ENCODE measurements at regions of chr20 and their contacts with region 1.

Region 1: DNA sequence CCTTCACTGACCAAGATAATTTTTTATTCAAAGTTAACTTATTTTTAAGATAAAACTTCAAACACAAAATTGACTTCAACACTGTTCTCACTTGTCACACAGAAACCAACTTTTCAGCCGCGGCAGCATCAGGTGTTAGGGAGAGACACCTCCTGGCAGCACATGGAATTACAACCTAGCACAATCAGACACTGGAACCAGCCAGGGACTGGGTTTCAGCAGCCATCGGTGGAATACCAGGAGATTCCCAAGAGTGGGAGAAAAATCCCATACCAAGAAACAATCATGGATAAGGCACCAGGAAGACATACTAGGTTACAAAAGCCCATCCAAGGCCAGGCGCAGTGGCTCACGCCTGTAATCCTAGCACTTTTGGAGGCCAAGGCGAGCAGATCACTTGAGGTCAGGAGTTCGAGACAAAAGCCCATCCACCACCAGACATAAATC is 70.0 kb downstream of the SNX5 start:
- DNase-seq: peak; percentile 78
- ATAC-seq: peak; percentile 80
- H3K4me3 ChIP-seq: no peak overlapping the region
- H3K4me3 Mint-ChIP-seq: no peak overlapping the region
- H3K27ac ChIP-seq: no peak overlapping the region
- H3K27ac Mint-ChIP-seq: peak overlapping the region; percentile 0
- H3K4me1 ChIP-seq: peaks cover 47 to 48% of the 10 kb centered on the region in 2 donors
- H3K4me1 Mint-ChIP-seq: peaks cover 46% of the 10 kb centered on the region
- H3K27me3 ChIP-seq: peaks cover 0 to 4% (median 2%) of the 10 kb centered on the region in 4 experiments
- H3K27me3 Mint-ChIP-seq: peaks cover 21% of the 10 kb centered on the region
- CTCF ChIP-seq: peak; percentile 98

Region 2: GRCh38 chr20:17504898-17505635 is 393.5 kb before region 1 on chr20:
- CTCF ChIA-PET with region 1: interaction called, 11 read pairs
- POLR2A ChIA-PET with region 1: no interaction called
- intact Hi-C with region 1: loop called (anchors 1 kb)
- DNase-seq: peak; percentile 83
- ATAC-seq: peak; percentile 84
- H3K4me3 ChIP-seq: peak overlapping the region; percentile 47 to 81 (median 59)
- H3K4me3 Mint-ChIP-seq: peak overlapping the region; percentile 94
- H3K27ac ChIP-seq: peak overlapping the region; percentile 20 to 51
- H3K27ac Mint-ChIP-seq: peak overlapping the region; percentile 60
- H3K4me1 ChIP-seq: peaks cover 9 to 17% of the 10 kb centered on the region in 2 donors
- H3K4me1 Mint-ChIP-seq: peaks cover 13% of the 10 kb centered on the region
- H3K27me3 ChIP-seq: no peaks in the 10 kb centered on the region
- H3K27me3 Mint-ChIP-seq: peaks cover 7% of the 10 kb centered on the region
- CTCF ChIP-seq: peak; percentile 80

Region 3: GRCh38 chr20:17654649-17655285 is 243.8 kb before region 1 on chr20:
- CTCF ChIA-PET with region 1: interaction called, 10 read pairs
- POLR2A ChIA-PET with region 1: no interaction called
- intact Hi-C with region 1: loop called (anchors 1 kb)
- DNase-seq: no peak
- ATAC-seq: no peak
- H3K4me3 ChIP-seq: no peak overlapping the region
- H3K4me3 Mint-ChIP-seq: no peak overlapping the region
- H3K27ac ChIP-seq: no peak overlapping the region
- H3K27ac Mint-ChIP-seq: no peak overlapping the region
- H3K4me1 ChIP-seq: no peaks in the 10 kb centered on the region
- H3K4me1 Mint-ChIP-seq: peaks cover 4% of the 10 kb centered on the region
- H3K27me3 ChIP-seq: no peaks in the 10 kb centered on the region
- H3K27me3 Mint-ChIP-seq: no peaks in the 10 kb centered on the region
- CTCF ChIP-seq: peak; percentile 45

Region 4: DNA sequence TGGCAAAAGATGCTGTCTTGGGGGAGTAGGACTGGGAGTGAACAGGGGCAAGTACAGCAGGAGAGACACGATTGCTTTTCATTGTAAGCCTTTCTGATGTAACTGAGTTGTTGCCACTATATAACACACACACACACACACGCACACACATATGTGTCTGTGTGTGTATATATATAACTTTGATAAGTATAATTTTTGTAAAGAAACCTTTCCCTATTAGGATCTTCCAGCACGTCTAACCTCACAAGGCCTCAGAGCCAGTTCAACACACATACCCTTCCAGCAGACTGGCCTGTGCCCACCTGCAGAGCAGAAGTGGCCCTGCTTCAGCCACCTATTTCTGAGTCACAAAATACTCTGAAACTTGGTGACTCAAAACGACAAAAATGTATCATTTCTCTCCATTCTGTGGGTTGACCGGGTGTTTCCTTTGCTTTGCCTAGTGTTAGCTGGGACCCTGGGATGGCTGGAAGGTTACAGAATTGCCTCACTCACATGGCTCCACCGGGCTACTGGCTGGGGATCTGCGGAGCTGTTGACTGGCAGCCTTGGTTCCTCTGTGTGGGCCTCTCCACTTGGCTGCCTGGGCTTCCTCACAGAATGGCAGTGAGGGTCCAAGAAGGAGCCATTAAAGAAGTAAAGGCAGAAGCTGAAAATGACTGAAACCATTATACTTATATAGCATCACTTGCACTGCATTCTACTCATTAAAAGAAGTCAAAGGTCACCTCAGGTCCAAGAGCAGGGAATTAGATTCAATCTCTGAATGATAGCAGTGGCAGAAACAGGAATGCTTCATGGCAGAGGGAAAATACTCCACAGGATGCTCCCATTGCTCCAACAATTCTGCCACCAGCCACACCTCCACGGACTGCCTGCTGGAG is 72.4 kb before region 1 on chr20:
- CTCF ChIA-PET with region 1: no interaction called
- POLR2A ChIA-PET with region 1: no interaction called
- intact Hi-C with region 1: no loop called
- DNase-seq: no peak
- ATAC-seq: no peak
- H3K4me3 ChIP-seq: no peak overlapping the region
- H3K4me3 Mint-ChIP-seq: no peak overlapping the region
- H3K27ac ChIP-seq: no peak overlapping the region
- H3K27ac Mint-ChIP-seq: no peak overlapping the region
- H3K4me1 ChIP-seq: no peaks in the 10 kb centered on the region
- H3K4me1 Mint-ChIP-seq: peaks cover 4% of the 10 kb centered on the region
- H3K27me3 ChIP-seq: no peaks in the 10 kb centered on the region
- H3K27me3 Mint-ChIP-seq: no peaks in the 10 kb centered on the region
- CTCF ChIP-seq: no peak

Region 5: GRCh38 chr20:17878912-17879602 is 19.5 kb before region 1 on chr20:
- CTCF ChIA-PET with region 1: interaction called, 4 read pairs
- POLR2A ChIA-PET with region 1: interaction called, 3 read pairs
- intact Hi-C with region 1: loop called (anchors 2 kb)
- DNase-seq: peak; percentile 69
- ATAC-seq: peak; percentile 74
- H3K4me3 ChIP-seq: peak overlapping the region in 2 of 5 experiments; percentile 9 to 12
- H3K4me3 Mint-ChIP-seq: peak overlapping the region; percentile 71
- H3K27ac ChIP-seq: peak overlapping the region; percentile 64 to 71
- H3K27ac Mint-ChIP-seq: peak overlapping the region; percentile 82
- H3K4me1 ChIP-seq: peaks cover 58 to 65% of the 10 kb centered on the region in 2 donors
- H3K4me1 Mint-ChIP-seq: peaks cover 56% of the 10 kb centered on the region
- H3K27me3 ChIP-seq: no peaks in the 10 kb centered on the region
- H3K27me3 Mint-ChIP-seq: no peaks in the 10 kb centered on the region
- CTCF ChIP-seq: peak; percentile 65

Region 6: GRCh38 chr20:17995967-17996819 is 97.6 kb after region 1 on chr20:
- CTCF ChIA-PET with region 1: interaction called, 12 read pairs
- POLR2A ChIA-PET with region 1: no interaction called
- intact Hi-C with region 1: loop called (anchors 1 kb)
- DNase-seq: peak; percentile 79
- ATAC-seq: peak; percentile 94
- H3K4me3 ChIP-seq: no peak overlapping the region
- H3K4me3 Mint-ChIP-seq: no peak overlapping the region
- H3K27ac ChIP-seq: no peak overlapping the region
- H3K27ac Mint-ChIP-seq: peak overlapping the region; percentile 54
- H3K4me1 ChIP-seq: peaks cover 16% of the 10 kb centered on the region in 2 donors
- H3K4me1 Mint-ChIP-seq: peaks cover 22% of the 10 kb centered on the region
- H3K27me3 ChIP-seq: no peaks in the 10 kb centered on the region
- H3K27me3 Mint-ChIP-seq: peaks cover 3% of the 10 kb centered on the region
- CTCF ChIP-seq: peak; percentile 99

Measured in B cell (primary cell).